ENCODE measurements at regions of chr9 and their contacts with region 1.

Region 1: GRCh38 chr9:100575765-100576386 is 2.0 kb upstream of the CAVIN4 start:
- DNase-seq: no peak
- ATAC-seq: no peak
- H3K4me3 ChIP-seq: no peak overlapping the region
- H3K27ac ChIP-seq: no peak overlapping the region
- H3K4me1 ChIP-seq: no peaks in the 10 kb centered on the region
- H3K27me3 ChIP-seq: no peaks in the 10 kb centered on the region
- CTCF ChIP-seq: no peak
- POLR2A ChIP-seq: no peak

Region 2: DNA sequence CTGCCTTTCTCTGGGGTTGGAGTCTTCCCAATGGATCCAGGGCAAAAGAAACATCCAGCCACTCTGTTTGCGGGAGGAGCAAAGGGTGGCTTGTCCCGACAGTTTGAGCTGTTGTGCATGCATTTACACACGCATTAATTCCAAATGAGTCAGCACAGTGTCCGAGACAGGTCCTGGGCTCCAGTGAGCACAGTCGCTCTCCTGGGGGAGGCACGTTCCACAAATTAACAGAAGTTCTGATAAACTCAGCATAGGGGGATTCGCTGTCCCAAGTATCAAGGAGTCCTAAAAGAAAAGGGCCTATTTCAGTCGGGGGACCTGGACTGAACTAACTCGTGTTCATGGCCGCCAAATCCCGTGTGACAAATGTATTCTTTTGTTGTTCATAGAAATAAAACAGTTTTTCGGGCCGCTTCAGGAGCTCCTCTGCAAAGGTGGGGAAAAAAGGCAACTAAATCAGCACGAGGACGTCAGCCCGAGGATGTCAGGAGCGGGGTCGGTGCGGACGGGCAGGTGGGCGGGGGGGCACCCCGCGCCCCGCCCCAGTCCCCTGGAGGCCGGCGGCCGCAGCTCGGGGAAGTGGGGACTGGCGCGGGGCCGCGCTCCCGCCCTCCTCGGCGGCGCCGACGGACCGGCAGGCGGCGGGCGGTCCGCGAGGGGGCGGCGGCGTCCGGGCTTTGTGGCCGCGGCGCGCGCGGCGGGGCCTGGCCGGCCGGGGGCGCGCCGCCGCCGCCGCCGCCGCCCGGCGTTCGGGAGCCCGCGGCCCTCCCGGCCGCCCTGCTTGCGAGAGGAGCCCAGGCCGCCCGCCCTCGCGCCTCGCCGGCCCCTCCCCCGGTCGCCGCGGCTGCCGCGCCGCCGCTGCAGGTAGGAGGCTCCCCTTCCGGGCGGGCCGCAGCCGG is 149.1 kb before region 1 on chr9 and contains the start of gene MSANTD3:
- intact Hi-C with region 1: loop called in 1 of 10 experiments (anchors 5 kb)
- DNase-seq: peak; percentile 67 to 85 (median 71)
- ATAC-seq: peak; percentile 65 to 83 (median 81)
- H3K4me3 ChIP-seq: peak within 1 kb of the TSS; percentile 64 to 98 (median 88)
- H3K27ac ChIP-seq: peak within 1 kb of the TSS; percentile 78 to 95 (median 86)
- H3K4me1 ChIP-seq: peaks cover 0 to 33% (median 20%) of the 10 kb centered on the region in 12 donors
- H3K27me3 ChIP-seq: no peaks in the 10 kb centered on the region
- CTCF ChIP-seq: peak in 2 of 12 donors; percentile 29 to 32
- POLR2A ChIP-seq: peak in 1 of 2 donors; percentile 53
- total RNA-seq, gene MSANTD3: 17.8 to 60.5 (median 24.1) TPM

Region 3: DNA sequence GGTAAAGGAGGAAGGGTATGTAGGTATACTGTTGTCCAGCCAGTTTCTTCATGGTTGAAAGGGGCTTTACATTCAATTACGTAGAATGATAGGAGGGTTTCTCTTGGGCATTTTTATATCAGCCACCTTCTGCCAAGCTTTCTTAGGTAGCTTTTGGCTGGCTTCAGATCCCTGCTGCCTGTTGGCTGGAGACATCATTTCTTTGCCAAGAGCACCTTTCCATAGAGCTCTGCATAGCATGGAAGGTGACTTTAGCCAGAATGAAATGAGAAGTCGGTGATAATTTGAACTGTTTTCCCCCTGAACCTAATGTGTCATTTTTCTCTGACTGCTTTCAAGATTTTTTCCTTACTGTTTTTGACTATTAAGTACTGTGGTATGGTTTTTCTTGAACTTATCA is 76.0 kb before region 1 on chr9:
- intact Hi-C with region 1: loop called in 1 of 10 experiments (anchors 5 kb)
- DNase-seq: no peak
- ATAC-seq: no peak
- H3K4me3 ChIP-seq: no peak overlapping the region
- H3K27ac ChIP-seq: no peak overlapping the region
- H3K4me1 ChIP-seq: no peaks in the 10 kb centered on the region
- H3K27me3 ChIP-seq: no peaks in the 10 kb centered on the region
- CTCF ChIP-seq: no peak
- POLR2A ChIP-seq: no peak

Region 4: GRCh38 chr9:100637787-100638186 is 61.9 kb after region 1 on chr9:
- intact Hi-C with region 1: no loop called
- DNase-seq: no peak
- ATAC-seq: no peak
- H3K4me3 ChIP-seq: no peak overlapping the region
- H3K27ac ChIP-seq: no peak overlapping the region
- H3K4me1 ChIP-seq: no peaks in the 10 kb centered on the region
- H3K27me3 ChIP-seq: peaks cover 0 to 13% (median 0%) of the 10 kb centered on the region in 9 donors
- CTCF ChIP-seq: no peak
- POLR2A ChIP-seq: no peak

Region 5: DNA sequence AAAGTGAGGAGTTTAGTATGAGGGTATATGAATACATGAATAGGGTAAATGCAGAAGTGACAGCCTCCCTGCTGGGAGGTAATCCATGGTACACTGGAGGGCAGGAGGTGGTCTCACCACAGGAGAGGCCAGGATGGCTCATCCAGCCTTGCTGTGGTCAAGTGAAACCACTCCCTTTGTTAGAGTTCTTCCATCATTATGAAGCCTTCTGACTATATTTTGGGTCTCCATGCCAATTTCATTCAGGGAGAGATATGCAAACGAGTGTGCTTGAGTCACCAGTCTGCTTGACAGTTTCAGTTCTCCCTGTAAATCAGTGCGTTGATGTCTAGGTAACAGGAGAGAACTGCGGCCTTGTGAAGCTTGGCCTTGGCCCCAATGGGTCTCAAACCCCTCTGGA is 1002.5 kb after region 1 on chr9:
- intact Hi-C with region 1: no loop called
- DNase-seq: no peak
- ATAC-seq: no peak
- H3K4me3 ChIP-seq: no peak overlapping the region
- H3K27ac ChIP-seq: no peak overlapping the region
- H3K4me1 ChIP-seq: peaks cover 0 to 8% (median 0%) of the 10 kb centered on the region in 12 donors
- H3K27me3 ChIP-seq: no peaks in the 10 kb centered on the region
- CTCF ChIP-seq: no peak
- POLR2A ChIP-seq: no peak